WTC11 (cell line): ENCODE measurements at regions of chr22 and their contacts with region 1.

Region 1: DNA sequence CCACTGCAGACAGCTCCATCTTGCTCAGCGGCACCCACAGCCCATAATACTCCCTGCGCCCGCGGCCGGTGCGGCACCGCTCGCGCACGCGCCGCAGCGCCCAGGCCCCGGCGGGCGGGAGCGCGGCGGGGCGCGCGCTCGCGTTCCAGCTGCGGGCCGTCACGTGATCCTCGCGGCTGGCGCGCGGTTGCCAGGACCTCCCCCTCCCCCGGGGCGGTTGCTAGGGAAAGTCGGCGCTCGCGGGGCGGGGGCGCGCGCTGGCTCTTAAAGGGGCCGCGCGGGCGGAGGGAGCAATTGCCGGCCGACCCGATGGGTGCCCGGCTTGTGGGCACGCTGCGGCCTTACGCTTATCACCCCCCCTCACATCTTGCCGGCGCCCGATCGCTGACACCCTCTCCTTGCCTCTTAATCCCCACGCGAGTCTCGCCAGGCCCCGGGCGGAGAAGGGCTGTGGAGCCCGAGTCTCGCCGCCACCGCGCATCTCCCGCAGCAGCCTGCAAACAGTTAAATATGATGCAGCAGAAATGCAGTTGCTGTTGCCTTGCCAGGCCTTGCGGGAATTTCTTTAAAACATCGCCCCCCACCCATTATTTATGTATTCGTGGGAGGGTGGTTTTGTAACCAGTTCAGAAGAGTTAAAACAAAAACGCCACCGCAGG is at the start of gene CBX6:
- DNase-seq: peak; percentile 96
- ATAC-seq: peak; percentile 49
- H3K4me3 Mint-ChIP-seq: peak within 1 kb of the TSS; percentile 93
- H3K27ac Mint-ChIP-seq: peak within 1 kb of the TSS; percentile 96
- H3K4me1 Mint-ChIP-seq: peaks cover 46% of the 10 kb centered on the region
- H3K27me3 Mint-ChIP-seq: peaks cover 7% of the 10 kb centered on the region
- CTCF ChIP-seq: no peak
- total RNA-seq, gene CBX6: 21.5 to 27.0 TPM (median 23.8 TPM) in 3 replicates

Region 2: DNA sequence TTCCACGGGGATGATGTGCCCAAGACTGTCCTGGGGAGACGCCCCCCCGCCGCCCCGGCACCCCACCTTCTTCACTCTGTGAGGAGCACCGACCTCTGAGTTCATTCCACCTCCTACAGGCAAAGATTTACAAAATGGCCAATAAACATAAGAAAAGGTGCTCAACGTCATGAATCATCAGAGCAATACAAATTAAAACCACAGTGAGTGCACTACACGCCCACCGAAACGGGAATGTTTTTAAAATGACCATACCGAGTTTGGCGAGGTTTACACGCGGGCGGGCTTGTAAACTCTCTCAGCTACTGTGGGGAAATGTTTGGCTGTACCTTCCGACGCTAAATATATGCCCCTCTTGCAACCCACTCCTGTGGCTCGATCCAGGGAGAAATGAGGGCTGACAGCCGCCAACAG is 36.4 kb before region 1 on chr22:
- CTCF ChIA-PET with region 1: interaction called, 12 read pairs
- POLR2A ChIA-PET with region 1: no interaction called
- DNase-seq: no peak
- ATAC-seq: no peak
- H3K4me3 Mint-ChIP-seq: peak overlapping the region; percentile 5; the same call in 1 of the 2 replicates
- H3K27ac Mint-ChIP-seq: peak overlapping the region; percentile 44; the same call in 1 of the 2 replicates
- H3K4me1 Mint-ChIP-seq: peaks cover 27% of the 10 kb centered on the region
- H3K27me3 Mint-ChIP-seq: peaks cover 12% of the 10 kb centered on the region
- CTCF ChIP-seq: no peak

Region 3: GRCh38 chr22:38850941-38851849 is 21.1 kb before region 1 on chr22:
- CTCF ChIA-PET with region 1: interaction called, 15 read pairs
- POLR2A ChIA-PET with region 1: no interaction called
- DNase-seq: no peak
- ATAC-seq: no peak
- H3K4me3 Mint-ChIP-seq: no peak overlapping the region
- H3K27ac Mint-ChIP-seq: no peak overlapping the region
- H3K4me1 Mint-ChIP-seq: no peaks in the 10 kb centered on the region
- H3K27me3 Mint-ChIP-seq: peaks cover 29% of the 10 kb centered on the region
- CTCF ChIP-seq: no peak

Region 4: GRCh38 chr22:38953577-38954413 is 81.5 kb after region 1 on chr22:
- CTCF ChIA-PET with region 1: interaction called, 22 read pairs
- POLR2A ChIA-PET with region 1: no interaction called
- DNase-seq: no peak
- ATAC-seq: no peak
- H3K4me3 Mint-ChIP-seq: no peak overlapping the region
- H3K27ac Mint-ChIP-seq: no peak overlapping the region
- H3K4me1 Mint-ChIP-seq: peaks cover 3% of the 10 kb centered on the region; the same call in 1 of the 2 replicates
- H3K27me3 Mint-ChIP-seq: peaks cover 1% of the 10 kb centered on the region
- CTCF ChIP-seq: no peak

Region 5: GRCh38 chr22:39135090-39135896 is 263.0 kb after region 1 on chr22:
- CTCF ChIA-PET with region 1: interaction called, 25 read pairs
- POLR2A ChIA-PET with region 1: no interaction called
- DNase-seq: peak; percentile 90
- ATAC-seq: peak; percentile 94
- H3K4me3 Mint-ChIP-seq: no peak overlapping the region
- H3K27ac Mint-ChIP-seq: peak overlapping the region; percentile 79
- H3K4me1 Mint-ChIP-seq: peaks cover 28% of the 10 kb centered on the region
- H3K27me3 Mint-ChIP-seq: no peaks in the 10 kb centered on the region; the same call in 1 of the 2 replicates
- CTCF ChIP-seq: peak; percentile 67